ENCODE measurements at regions of chr3 and their contacts with region 1.

Region 1: DNA sequence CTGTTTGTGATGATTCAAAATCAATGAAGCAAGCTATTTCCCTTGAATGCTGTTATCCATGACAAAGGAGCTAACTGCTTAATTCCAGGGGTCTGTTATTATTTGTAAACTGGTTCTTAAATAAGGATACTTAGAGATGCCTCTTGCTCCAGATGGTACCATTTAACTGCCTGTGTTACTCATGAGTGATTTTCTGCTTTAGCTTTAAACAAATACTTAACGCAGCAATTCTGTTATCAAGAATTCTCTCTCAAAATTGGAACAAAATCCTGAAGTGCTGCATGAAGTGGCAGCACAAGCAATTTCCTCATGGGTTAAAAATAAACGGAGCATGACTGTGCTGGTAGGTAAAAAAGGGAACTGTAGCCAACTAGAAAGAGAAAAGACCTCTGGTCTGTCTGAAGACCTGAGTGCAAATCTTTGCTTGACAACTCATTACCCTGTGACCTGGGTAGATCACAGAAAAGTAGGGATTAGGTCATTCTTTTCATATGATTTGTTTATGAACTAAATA is 62.5 kb upstream of the GBE1 start:
- DNase-seq: peak; percentile 72 to 87 (median 84)
- H3K4me3 ChIP-seq: peak overlapping the region in 1 of 3 experiments; percentile 62
- H3K4me3 Mint-ChIP-seq: peak overlapping the region in 1 of 2 donors; percentile 71
- H3K27ac ChIP-seq: peak overlapping the region in 1 of 2 donors; percentile 81
- H3K27ac Mint-ChIP-seq: peak overlapping the region; percentile 15 to 84 (median 73)
- H3K4me1 ChIP-seq: peaks cover 15 to 25% of the 10 kb centered on the region in 2 donors
- H3K4me1 Mint-ChIP-seq: peaks cover 17% of the 10 kb centered on the region
- H3K27me3 ChIP-seq: no peaks in the 10 kb centered on the region
- H3K27me3 Mint-ChIP-seq: no peaks in the 10 kb centered on the region
- CTCF ChIP-seq: no peak

Region 2: DNA sequence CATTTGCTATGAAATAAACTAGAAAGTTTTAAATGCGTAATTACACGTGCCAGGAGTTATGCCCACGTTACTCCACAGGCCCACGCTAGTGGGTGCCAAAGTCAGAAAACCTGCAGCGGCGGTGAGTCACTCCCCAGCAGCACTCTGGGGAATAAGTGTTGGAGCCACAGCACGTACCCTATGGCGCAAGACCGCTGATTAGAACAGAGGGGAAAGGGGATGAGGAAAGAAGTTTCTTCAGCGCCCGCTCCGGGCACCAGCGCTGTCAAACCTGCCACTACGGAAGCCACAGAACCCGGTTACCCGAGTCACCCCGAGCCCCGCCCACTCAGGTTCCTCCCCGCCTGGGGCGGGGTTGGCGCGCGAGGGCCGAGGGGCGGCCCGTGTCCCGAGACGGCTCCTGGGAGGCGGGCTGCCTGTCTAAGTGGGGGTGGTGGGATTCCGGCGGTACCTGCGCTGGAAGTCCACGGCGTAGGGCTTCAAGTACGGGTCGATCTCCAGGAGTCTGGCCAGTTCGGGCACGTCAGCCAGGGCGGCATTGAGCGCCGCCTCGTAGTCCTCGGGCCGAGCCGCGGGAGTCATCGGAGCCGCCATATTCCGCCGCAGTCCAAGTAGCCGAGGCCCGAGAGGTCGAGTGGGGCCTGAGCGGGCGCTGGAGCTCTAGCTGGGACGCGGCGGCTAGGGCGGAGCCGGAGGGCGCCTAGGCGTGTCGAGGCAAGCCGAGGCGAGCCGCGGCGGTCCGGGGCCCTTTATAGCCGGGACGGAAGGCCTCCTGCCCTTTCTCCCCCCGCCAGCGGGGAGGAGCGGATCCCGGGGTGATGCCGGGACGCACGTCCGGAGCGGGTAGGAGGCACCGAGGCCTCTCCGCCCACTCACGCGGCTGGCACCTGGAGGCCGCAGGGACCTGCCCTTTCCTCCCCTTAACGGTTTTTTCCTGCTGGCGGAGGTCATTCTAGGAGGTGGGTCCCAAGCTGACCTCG is 62.7 kb before region 1 on chr3 and contains the start of gene GBE1:
- intact Hi-C with region 1: loop called in 1 of 2 experiments (anchors 1 kb)
- DNase-seq: peak; percentile 99
- H3K4me3 ChIP-seq: peak within 1 kb of the TSS; percentile 55 to 75 (median 72)
- H3K4me3 Mint-ChIP-seq: peak within 1 kb of the TSS; percentile 81 to 93
- H3K27ac ChIP-seq: peak within 1 kb of the TSS; percentile 96 to 99
- H3K27ac Mint-ChIP-seq: peak within 1 kb of the TSS; percentile 98 to 100 (median 100)
- H3K4me1 ChIP-seq: peaks cover 12 to 22% of the 10 kb centered on the region in 2 donors
- H3K4me1 Mint-ChIP-seq: peaks cover 29% of the 10 kb centered on the region
- H3K27me3 ChIP-seq: no peaks in the 10 kb centered on the region
- H3K27me3 Mint-ChIP-seq: peaks cover 0 to 2% (median 2%) of the 10 kb centered on the region in 3 donors
- CTCF ChIP-seq: peak; percentile 74
- polyA plus RNA-seq, gene GBE1: 7.7 to 21.7 (median 19.1) TPM